ENCODE measurements at regions of chr17 and their contacts with region 1.

Region 1: DNA sequence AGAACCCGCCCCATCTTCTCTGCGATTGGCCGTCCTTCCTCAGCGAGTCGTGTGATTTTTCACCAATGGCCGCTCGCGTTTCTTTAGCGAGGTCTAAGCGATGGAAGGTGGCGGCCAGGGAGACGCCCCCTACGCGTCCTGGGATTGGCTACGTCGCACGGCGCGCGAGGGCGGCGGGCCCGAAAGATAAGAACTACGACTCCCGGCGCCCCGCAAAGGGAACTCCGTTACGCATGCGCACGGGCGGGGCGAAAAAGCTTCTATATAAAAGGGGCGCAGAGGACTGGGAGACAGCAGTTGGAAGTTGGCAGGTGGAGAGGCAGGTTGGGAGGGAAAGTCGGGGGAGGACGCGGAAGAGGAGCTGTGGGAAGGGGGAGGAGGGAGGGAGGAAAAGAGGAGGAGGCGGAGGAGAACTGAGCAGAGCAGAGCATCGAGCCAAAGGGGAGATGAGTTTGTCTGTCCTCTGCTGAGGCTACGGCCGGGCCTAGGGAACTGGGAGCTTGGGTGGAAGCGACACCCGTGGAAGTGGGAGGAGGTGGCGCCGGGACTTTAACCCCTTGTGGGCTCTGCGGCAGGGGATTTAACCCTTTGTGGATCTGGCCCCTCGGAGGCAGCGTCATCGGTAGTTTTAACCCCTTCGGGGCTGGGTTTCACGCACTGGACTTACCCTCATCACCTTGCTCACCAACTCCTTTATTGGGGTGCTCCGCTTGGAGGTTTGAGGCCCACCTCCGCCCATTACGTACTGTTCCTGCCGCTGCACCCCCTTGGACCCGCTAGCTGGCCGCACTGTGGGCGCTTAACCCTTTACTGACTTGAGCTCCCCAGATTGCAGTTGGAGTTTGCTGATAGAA is at the start of gene HEXIM1:
- DNase-seq: peak; percentile 100
- total RNA-seq, gene HEXIM1: 19.8 TPM

Region 2: DNA sequence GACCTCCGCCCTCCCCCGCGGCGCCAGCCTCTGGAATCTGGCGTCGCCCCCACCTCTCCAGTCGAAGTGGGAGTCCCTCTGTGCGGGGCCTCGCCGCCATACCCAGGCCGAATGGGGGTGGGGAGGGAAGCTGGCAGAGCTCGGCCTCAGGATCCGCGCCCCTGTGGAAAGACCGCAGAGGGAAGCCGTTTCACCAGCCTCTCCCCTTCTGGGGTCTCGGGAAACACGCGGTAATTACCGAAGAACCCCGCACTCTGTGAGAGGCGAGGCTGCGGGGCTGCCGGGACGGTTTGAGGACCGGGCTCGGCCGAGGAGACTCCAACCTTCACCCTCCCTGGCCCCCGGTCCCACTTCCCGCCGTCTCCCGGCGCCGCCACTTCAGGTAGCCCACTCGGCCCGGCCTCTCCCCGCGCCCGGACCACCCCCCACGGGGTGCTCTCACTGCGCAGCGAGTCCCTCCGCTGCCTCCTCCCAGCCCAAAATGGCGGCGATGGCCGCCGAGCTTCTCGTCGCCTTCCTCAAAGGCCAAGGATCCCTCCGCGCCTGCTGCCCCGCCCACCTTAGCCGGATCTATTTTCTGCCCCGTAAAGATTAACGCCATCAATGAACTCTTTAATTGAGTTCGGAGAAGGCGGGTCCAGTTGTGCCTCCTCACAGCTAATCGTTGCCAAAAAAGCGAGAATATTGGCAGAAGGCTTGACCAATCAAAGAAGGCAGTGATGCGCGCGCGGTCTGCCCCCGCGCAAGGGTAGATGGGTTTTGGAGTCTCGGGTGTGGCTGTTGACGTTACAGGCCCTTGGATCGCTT is 12.8 kb after region 1 on chr17:
- intact Hi-C with region 1: loop called (anchors 1 kb)
- DNase-seq: peak; percentile 99

Region 3: DNA sequence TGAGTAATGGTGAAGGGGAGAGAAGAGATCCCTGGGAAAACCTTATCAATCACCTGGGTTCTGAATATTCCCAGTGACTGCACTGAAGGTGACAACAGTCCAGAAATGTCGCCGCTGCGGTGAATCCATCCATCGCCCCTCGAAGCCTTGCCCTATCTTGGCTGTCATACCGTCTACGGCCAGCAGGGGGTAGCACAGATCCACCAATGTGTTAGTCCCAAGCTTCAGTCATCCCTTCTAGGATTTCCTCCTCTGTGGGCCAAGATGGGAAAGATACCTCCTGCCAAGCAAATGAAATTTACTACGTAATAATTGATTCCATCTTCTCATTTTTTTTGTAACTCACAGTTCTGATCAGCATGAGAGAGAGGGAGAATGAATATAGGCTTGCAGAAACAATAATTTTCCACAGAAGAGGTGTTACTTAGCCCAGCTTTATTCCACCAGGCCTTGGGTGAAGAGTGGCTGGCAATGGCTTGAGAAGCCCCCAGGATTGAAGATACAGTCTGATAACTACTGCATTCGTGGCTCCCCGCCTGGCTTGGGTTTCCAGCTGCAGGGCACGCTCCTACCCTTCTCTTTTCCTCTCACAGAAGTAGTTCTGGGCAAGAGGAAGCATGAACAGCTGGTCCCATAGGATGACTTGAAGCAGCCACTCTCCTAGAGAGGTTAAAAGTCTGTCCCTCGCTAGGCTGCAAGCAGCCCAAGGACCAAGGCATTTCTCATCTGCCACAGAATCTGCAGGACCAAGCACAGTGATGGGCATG is 70.7 kb after region 1 on chr17:
- intact Hi-C with region 1: no loop called
- DNase-seq: peak; percentile 88